ENCODE measurements at regions of chr16 and their contacts with region 1.

Region 1: GRCh38 chr16:13453938-13454553 is 465.9 kb upstream of the ERCC4 start:
- DNase-seq: peak; percentile 23
- H3K4me3 ChIP-seq: no peak overlapping the region
- H3K27ac ChIP-seq: no peak overlapping the region
- H3K4me1 ChIP-seq: no peaks in the 10 kb centered on the region
- H3K27me3 ChIP-seq: no peaks in the 10 kb centered on the region
- CTCF ChIP-seq: peak; percentile 71

Region 2: GRCh38 chr16:12573730-12574383 is 880.2 kb before region 1 on chr16:
- CTCF ChIA-PET with region 1: no interaction called
- POLR2A ChIA-PET with region 1: no interaction called
- intact Hi-C with region 1: loop called (anchors 5 kb)
- DNase-seq: peak; percentile 46
- H3K4me3 ChIP-seq: no peak overlapping the region
- H3K27ac ChIP-seq: no peak overlapping the region
- H3K4me1 ChIP-seq: no peaks in the 10 kb centered on the region
- H3K27me3 ChIP-seq: no peaks in the 10 kb centered on the region
- CTCF ChIP-seq: peak; percentile 74

Region 3: DNA sequence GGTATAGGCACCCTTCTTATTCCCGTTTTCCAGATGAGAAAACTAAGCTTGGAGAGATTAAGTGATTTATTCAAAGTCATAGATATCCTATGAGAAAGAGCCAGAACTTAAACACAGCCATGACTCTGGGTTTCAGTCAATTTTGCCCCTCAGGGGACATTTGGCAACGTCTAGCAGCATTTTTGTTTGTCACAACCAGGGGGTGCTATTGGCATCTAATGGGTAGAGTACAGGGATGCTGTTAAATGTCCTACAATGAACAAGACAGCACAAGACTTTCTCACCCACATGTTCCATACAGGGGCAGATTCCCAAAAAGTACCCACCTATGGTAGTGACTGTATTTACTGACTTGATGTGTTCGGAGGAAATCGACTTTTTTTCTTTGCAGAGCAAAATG is 557.5 kb before region 1 on chr16:
- CTCF ChIA-PET with region 1: no interaction called
- POLR2A ChIA-PET with region 1: no interaction called
- intact Hi-C with region 1: loop called (anchors 5 kb)
- DNase-seq: peak; percentile 43
- H3K4me3 ChIP-seq: no peak overlapping the region
- H3K27ac ChIP-seq: no peak overlapping the region
- H3K4me1 ChIP-seq: no peaks in the 10 kb centered on the region
- H3K27me3 ChIP-seq: peaks cover 26% of the 10 kb centered on the region
- CTCF ChIP-seq: peak; percentile 60

Region 4: GRCh38 chr16:13414154-13414553 is 39.9 kb before region 1 on chr16:
- CTCF ChIA-PET with region 1: no interaction called
- POLR2A ChIA-PET with region 1: no interaction called
- intact Hi-C with region 1: no loop called
- DNase-seq: no peak
- H3K4me3 ChIP-seq: no peak overlapping the region
- H3K27ac ChIP-seq: no peak overlapping the region
- H3K4me1 ChIP-seq: no peaks in the 10 kb centered on the region
- H3K27me3 ChIP-seq: no peaks in the 10 kb centered on the region
- CTCF ChIP-seq: no peak